Activated naive CD4-positive, alpha-beta T cell treated with anti-CD3 and anti-CD28 coated beads for 36 hours (primary cell): ENCODE measurements at regions of chr4 and their contacts with region 1.

Region 1: GRCh38 chr4:166165829-166166420 is 292.9 kb downstream of the TLL1 start:
- DNase-seq: peak; percentile 8
- H3K4me3 Mint-ChIP-seq: no peak overlapping the region
- H3K27ac Mint-ChIP-seq: no peak overlapping the region
- H3K4me1 Mint-ChIP-seq: peaks cover 2% of the 10 kb centered on the region
- H3K27me3 Mint-ChIP-seq: no peaks in the 10 kb centered on the region

Region 2: GRCh38 chr4:166252487-166253402 is 86.8 kb after region 1 on chr4:
- CTCF ChIA-PET with region 1: interaction called, 3 read pairs
- intact Hi-C with region 1: loop called (anchors 1 kb)
- DNase-seq: peak; percentile 10
- H3K4me3 Mint-ChIP-seq: no peak overlapping the region
- H3K27ac Mint-ChIP-seq: no peak overlapping the region
- H3K4me1 Mint-ChIP-seq: no peaks in the 10 kb centered on the region
- H3K27me3 Mint-ChIP-seq: no peaks in the 10 kb centered on the region

Region 3: DNA sequence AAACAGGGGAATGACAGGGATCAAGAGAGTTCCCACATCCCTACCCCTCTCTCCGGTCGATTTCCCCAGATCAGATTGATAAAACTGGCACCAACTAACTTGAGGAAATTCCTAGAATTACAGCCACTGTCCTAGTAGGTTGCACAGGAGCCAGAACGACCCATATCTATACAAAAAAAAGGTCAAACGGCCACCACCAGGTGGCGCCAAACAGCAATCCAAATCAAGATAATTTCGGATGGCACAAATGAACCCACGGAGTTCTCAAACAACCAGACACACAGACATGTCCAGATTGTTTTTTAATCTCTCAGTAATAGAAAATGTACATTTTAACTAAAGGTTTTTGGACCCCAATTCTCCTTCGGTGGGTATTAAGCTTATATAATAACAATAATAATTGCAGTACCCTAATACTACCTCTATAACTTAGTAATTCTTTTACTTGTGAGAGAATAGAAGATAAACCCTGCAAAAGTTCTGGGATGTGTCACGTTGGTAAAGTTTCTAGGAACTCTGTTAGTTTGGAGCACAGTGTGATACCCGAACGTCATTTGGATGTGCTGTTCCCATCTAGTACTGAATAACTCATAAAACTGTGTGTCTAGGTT is 855.7 kb after region 1 on chr4:
- CTCF ChIA-PET with region 1: no interaction called
- intact Hi-C with region 1: loop called (anchors 2 kb)
- DNase-seq: peak; percentile 74
- H3K4me3 Mint-ChIP-seq: no peak overlapping the region
- H3K27ac Mint-ChIP-seq: no peak overlapping the region
- H3K4me1 Mint-ChIP-seq: no peaks in the 10 kb centered on the region
- H3K27me3 Mint-ChIP-seq: peaks cover 3% of the 10 kb centered on the region

Region 4: DNA sequence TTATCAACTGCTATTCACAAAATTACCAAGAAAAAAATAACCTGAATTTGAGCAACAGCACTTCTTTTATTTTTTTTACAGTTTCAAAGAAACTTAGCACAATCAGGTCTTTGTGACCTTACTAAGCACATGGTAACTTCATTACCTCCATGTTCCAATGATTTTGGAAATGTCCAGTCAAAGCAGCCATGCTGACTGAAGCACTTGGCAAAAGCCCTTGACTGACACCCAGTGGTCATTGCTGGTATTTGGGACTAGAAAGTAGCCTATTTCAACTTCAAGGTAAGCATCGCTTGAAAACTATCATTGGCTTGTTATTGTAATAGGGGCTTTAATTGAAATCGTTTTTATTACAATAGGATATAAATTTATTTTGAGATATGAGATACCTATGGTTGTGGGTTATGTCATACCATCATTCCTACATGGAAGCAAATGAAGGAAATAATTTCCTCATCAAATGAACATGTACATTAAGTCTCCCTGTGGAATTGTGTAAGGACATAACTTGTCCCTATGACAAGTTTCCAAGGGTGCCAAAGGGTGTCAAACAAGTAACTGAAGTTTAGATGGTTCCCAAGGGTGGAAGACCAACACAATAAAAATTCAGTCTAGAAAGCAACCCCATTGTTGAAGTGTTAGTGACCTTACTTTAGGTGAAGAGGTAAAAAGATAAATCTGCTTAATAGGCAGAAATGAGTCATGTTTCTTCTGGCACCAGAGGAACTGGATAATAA is 1911.2 kb after region 1 on chr4:
- CTCF ChIA-PET with region 1: no interaction called
- intact Hi-C with region 1: loop called (anchors 1 kb)
- DNase-seq: peak; percentile 76
- H3K4me3 Mint-ChIP-seq: no peak overlapping the region
- H3K27ac Mint-ChIP-seq: no peak overlapping the region
- H3K4me1 Mint-ChIP-seq: no peaks in the 10 kb centered on the region
- H3K27me3 Mint-ChIP-seq: no peaks in the 10 kb centered on the region